ENCODE measurements at regions of chr14 and their contacts with region 1.

Region 1: GRCh38 chr14:22099942-22100763 is 426.5 kb upstream of the OR4E1 start:
- DNase-seq: peak; percentile 77
- ATAC-seq: peak; percentile 79
- H3K4me3 Mint-ChIP-seq: no peak overlapping the region
- H3K27ac Mint-ChIP-seq: no peak overlapping the region
- H3K4me1 Mint-ChIP-seq: peaks cover 41% of the 10 kb centered on the region
- H3K27me3 Mint-ChIP-seq: no peaks in the 10 kb centered on the region

Region 2: DNA sequence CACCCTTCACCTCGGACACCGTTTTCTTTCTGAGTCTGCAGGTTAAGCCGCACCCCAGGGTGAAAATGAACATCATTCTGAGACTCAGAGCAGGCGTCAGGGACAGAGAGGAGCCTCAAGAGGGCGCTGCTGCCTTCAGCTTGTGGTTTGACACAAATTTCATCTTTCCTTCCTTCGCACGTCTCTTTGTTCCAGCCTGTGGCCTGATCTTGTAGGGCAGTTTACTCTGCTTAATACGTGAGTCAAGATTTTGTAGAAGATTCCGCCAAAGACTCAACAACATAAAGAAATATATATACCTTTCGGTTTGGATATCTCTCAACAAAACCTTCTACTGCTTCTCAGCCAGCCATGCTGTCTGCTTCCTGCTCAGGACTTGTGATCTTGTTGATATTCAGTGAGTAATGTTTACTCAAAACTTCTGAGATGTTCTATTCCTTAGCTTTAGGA is 97.3 kb before region 1 on chr14:
- CTCF ChIA-PET with region 1: interaction called, 3 read pairs
- POLR2A ChIA-PET with region 1: no interaction called
- intact Hi-C with region 1: loop called in 1 of 2 experiments (anchors 5 kb)
- DNase-seq: peak; percentile 87
- ATAC-seq: peak; percentile 80
- H3K4me3 Mint-ChIP-seq: peak overlapping the region; percentile 80
- H3K27ac Mint-ChIP-seq: peak overlapping the region; percentile 83
- H3K4me1 Mint-ChIP-seq: peaks cover 26% of the 10 kb centered on the region
- H3K27me3 Mint-ChIP-seq: no peaks in the 10 kb centered on the region

Region 3: GRCh38 chr14:22047115-22047514 is 53.0 kb before region 1 on chr14:
- CTCF ChIA-PET with region 1: interaction called, 10 read pairs
- POLR2A ChIA-PET with region 1: no interaction called
- intact Hi-C with region 1: loop called (anchors 1 to 5 kb)
- DNase-seq: peak; percentile 43
- ATAC-seq: peak; percentile 91
- H3K4me3 Mint-ChIP-seq: peak overlapping the region; percentile 39
- H3K27ac Mint-ChIP-seq: peak overlapping the region; percentile 82
- H3K4me1 Mint-ChIP-seq: peaks cover 39% of the 10 kb centered on the region
- H3K27me3 Mint-ChIP-seq: no peaks in the 10 kb centered on the region

Region 4: GRCh38 chr14:22084393-22085281 is 15.5 kb before region 1 on chr14:
- CTCF ChIA-PET with region 1: interaction called, 42 read pairs
- POLR2A ChIA-PET with region 1: no interaction called
- intact Hi-C with region 1: loop called (anchors 1 kb)
- DNase-seq: no peak
- ATAC-seq: peak; percentile 63
- H3K4me3 Mint-ChIP-seq: peak overlapping the region; percentile 65
- H3K27ac Mint-ChIP-seq: peak overlapping the region; percentile 74
- H3K4me1 Mint-ChIP-seq: peaks cover 24% of the 10 kb centered on the region
- H3K27me3 Mint-ChIP-seq: no peaks in the 10 kb centered on the region